ENCODE measurements at regions of chr3 and their contacts with region 1.

Region 1: GRCh38 chr3:193040836-193041672 is 123.4 kb upstream of the MB21D2 start:
- DNase-seq: no peak
- ATAC-seq: peak in 1 of 4 donors; percentile 78
- H3K4me3 ChIP-seq: no peak overlapping the region
- H3K27ac ChIP-seq: no peak overlapping the region
- H3K4me1 ChIP-seq: no peaks in the 10 kb centered on the region
- H3K27me3 ChIP-seq: no peaks in the 10 kb centered on the region
- CTCF ChIP-seq: peak; percentile 48

Region 2: GRCh38 chr3:192566706-192567290 is 474.3 kb before region 1 on chr3:
- intact Hi-C with region 1: loop called in 1 of 2 experiments (anchors 10 kb)
- DNase-seq: peak; percentile 40 to 62
- ATAC-seq: peak; percentile 54 to 83 (median 75)
- H3K4me3 ChIP-seq: no peak overlapping the region
- H3K27ac ChIP-seq: no peak overlapping the region
- H3K4me1 ChIP-seq: no peaks in the 10 kb centered on the region
- H3K27me3 ChIP-seq: no peaks in the 10 kb centered on the region
- CTCF ChIP-seq: peak; percentile 81

Region 3: GRCh38 chr3:192642651-192643050 is 398.4 kb before region 1 on chr3:
- intact Hi-C with region 1: no loop called
- DNase-seq: peak in 1 of 2 donors; percentile 9
- ATAC-seq: no peak
- H3K4me3 ChIP-seq: no peak overlapping the region
- H3K27ac ChIP-seq: no peak overlapping the region
- H3K4me1 ChIP-seq: no peaks in the 10 kb centered on the region
- H3K27me3 ChIP-seq: no peaks in the 10 kb centered on the region
- CTCF ChIP-seq: no peak

Region 4: DNA sequence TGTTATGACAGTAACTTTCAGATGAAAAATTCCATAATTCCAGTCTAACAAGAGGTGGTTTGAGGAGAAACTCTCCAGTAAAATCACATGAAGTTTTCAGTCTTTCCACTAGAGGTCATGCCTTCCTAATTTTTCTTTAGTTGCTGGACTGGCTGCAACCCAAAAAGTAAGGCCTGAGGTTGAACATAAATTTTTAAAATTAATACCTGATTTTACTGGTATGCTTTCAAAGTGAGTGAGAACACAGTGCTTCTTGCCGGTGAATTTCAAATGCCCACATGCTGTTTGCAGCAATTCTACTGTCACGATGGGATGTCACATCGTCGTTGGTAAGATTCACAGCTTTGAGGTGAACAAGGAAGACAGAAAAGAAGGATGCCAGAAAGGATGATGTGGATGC is 224.7 kb before region 1 on chr3:
- intact Hi-C with region 1: loop called (anchors 2 kb)
- DNase-seq: no peak
- ATAC-seq: peak in 2 of 4 donors; percentile 43 to 80
- H3K4me3 ChIP-seq: no peak overlapping the region
- H3K27ac ChIP-seq: no peak overlapping the region
- H3K4me1 ChIP-seq: no peaks in the 10 kb centered on the region
- H3K27me3 ChIP-seq: no peaks in the 10 kb centered on the region
- CTCF ChIP-seq: peak; percentile 82

Region 5: GRCh38 chr3:193068365-193068764 is 27.3 kb after region 1 on chr3:
- intact Hi-C with region 1: no loop called
- DNase-seq: no peak
- ATAC-seq: no peak
- H3K4me3 ChIP-seq: no peak overlapping the region
- H3K27ac ChIP-seq: no peak overlapping the region
- H3K4me1 ChIP-seq: no peaks in the 10 kb centered on the region
- H3K27me3 ChIP-seq: no peaks in the 10 kb centered on the region
- CTCF ChIP-seq: no peak

Region 6: DNA sequence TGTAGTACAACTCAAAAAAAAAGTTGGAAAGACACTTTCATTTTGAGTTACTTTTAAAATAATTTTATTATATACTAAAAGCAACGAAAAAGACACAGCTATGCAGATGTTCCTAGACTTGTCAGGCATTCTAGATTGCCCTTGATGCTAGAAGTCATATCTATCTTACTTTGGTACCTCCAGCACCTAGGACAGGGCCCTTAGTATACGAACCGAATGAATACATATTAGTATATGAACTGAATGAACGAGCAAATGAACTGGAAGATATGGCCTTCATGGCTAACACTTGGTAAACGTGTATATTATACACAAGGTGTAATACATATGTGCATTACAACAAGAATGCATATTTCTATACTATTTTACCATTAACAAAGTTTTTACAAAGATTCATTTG is 313.4 kb after region 1 on chr3:
- intact Hi-C with region 1: no loop called
- DNase-seq: no peak
- ATAC-seq: no peak
- H3K4me3 ChIP-seq: no peak overlapping the region
- H3K27ac ChIP-seq: no peak overlapping the region
- H3K4me1 ChIP-seq: peaks cover 6% of the 10 kb centered on the region
- H3K27me3 ChIP-seq: no peaks in the 10 kb centered on the region
- CTCF ChIP-seq: no peak

Measured in psoas muscle (tissue), 8 donors.